Activated T-helper 1 cell treated with anti-CD3 and anti-CD28 coated beads, Interleukin-12 subunit alpha, Interleukin-12 subunit beta, Interleukin-2, Interleukin-4 antibody, amounts not matched to agents 30 ng/mL and 10 ng/mL and 1 ng/mL, durations not matched to agents 14 hours and 24 hours and 36 hours (primary cell): ENCODE measurements at regions of chr2 and their contacts with region 1.

Region 1: DNA sequence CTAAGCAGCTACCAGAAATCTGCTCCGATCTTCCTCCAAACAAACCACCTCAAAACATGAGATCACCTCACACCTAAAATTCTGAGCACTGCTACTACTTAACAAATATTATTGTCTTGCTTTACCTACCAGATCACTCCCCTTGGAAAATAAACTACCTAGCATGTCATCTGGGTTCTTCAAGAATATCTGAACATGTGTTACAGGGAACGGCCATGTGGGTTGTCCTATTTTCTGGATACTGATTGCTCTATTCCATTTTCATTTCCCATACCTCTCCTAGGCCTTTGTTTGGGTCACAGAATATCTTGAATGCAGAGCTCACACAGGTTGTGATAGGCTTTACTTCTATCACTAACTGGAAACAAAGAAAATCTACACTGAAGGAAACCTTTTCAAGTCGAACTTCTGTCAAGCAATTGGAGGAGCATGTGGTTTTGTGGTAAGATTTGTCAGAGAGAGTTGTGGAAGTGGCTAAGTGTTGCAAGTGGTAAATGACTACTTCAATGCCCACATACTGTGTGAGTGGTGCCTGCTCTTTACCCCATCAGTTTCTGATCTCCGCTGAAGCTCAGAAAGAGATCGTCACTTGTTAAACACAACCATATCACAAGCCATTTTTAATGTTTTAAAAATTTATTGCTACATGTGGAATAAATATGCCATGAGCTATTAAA is 739.1 kb upstream of the ZEB2 start:
- DNase-seq: peak; percentile 4
- H3K4me3 Mint-ChIP-seq: no peak overlapping the region
- H3K27ac Mint-ChIP-seq: no peak overlapping the region
- H3K4me1 Mint-ChIP-seq: peaks cover 18% of the 10 kb centered on the region
- H3K27me3 Mint-ChIP-seq: peaks cover 28% of the 10 kb centered on the region

Region 2: GRCh38 chr2:145323512-145323911 is 64.5 kb after region 1 on chr2:
- intact Hi-C with region 1: loop called (anchors 1 kb)
- DNase-seq: peak; percentile 2
- H3K4me3 Mint-ChIP-seq: peak overlapping the region; percentile 20
- H3K27ac Mint-ChIP-seq: peak overlapping the region; percentile 25
- H3K4me1 Mint-ChIP-seq: peaks cover 20% of the 10 kb centered on the region
- H3K27me3 Mint-ChIP-seq: peaks cover 7% of the 10 kb centered on the region

Region 3: DNA sequence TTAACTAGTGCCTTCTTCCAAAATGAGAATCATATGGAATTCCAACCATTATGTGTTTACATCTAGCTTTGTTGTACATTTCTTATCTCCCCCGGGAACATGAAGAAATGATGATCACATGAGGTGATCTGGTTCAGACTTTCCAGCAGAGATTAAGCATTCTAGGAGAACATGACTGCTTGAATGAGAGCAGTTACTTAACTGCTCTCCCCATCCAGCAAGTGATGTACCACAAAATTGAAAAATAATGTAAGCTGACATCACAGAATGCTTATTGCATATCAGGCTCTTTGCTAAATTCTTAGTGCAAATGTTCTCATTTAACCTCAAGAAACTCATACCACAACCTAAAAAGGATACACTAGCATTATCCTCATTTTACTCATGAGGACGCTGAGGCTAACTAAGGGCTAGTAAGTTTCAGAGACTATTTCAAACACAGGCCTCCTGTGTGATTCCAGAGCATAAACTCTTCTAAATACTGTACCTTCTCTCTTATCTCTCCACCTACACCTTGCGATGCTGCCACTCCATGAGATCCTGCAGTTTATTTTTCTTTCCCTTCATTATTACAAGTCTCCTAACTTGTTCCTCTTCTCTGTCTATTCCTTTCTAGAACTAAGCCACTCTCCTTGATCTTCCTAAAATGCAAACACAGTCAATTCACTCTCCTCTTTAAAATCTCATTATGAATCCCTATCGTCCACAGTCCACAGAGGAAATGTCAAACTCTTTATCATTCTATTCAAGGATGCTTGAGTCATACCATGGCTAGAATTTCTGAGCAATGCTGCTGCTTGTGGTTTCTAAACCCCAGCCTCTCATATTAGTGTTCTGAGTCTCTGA is 485.7 kb after region 1 on chr2:
- intact Hi-C with region 1: loop called (anchors 10 kb)
- DNase-seq: no peak
- H3K4me3 Mint-ChIP-seq: no peak overlapping the region
- H3K27ac Mint-ChIP-seq: no peak overlapping the region
- H3K4me1 Mint-ChIP-seq: peaks cover 14% of the 10 kb centered on the region
- H3K27me3 Mint-ChIP-seq: no peaks in the 10 kb centered on the region

Region 4: GRCh38 chr2:145771525-145771924 is 512.5 kb after region 1 on chr2:
- intact Hi-C with region 1: no loop called
- DNase-seq: no peak
- H3K4me3 Mint-ChIP-seq: no peak overlapping the region
- H3K27ac Mint-ChIP-seq: no peak overlapping the region
- H3K4me1 Mint-ChIP-seq: no peaks in the 10 kb centered on the region
- H3K27me3 Mint-ChIP-seq: no peaks in the 10 kb centered on the region